Mammary epithelial cell (primary cell): ENCODE measurements at regions of chr3 and their contacts with region 1.

Region 1: DNA sequence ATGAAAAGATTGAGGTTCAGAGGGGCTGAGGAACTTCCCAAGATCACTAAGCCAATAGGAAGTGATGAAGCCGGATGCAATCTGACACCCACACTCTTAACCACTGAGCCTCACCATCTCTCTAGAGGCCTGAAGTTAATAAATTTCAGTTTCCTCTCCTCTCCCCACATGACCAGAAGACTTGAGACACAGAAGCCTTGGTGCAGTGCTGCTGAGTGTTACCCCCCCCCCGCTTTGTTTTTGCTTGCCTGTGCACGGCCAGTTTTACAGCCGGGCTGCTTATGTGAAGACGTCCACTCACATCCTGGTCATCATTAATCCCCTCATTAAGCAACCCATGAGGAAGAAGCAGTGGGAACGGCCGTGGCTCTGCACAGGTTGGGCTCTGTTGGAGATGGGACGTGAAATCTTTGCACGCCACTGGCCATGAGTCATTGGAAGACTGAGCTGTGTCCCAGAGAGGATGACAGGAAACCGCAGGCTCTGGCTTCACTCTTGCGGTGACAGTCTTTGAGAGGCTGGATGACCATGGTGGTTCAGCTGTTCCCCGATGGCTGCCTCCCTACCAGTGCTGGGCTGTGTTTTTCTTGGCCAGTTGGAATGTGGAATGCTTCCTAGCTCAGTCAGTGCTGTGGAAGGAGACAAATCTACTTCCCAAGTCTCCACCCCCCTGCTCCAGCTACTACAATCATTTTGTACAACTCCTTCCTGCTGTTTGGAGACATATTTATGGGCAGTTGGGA is 232.6 kb upstream of the LRTM1 start:
- DNase-seq: peak; percentile 14
- H3K4me3 ChIP-seq: no peak overlapping the region
- H3K27ac ChIP-seq: no peak overlapping the region
- H3K4me1 ChIP-seq: no peaks in the 10 kb centered on the region
- H3K27me3 ChIP-seq: no peaks in the 10 kb centered on the region
- CTCF ChIP-seq: no peak

Region 2: DNA sequence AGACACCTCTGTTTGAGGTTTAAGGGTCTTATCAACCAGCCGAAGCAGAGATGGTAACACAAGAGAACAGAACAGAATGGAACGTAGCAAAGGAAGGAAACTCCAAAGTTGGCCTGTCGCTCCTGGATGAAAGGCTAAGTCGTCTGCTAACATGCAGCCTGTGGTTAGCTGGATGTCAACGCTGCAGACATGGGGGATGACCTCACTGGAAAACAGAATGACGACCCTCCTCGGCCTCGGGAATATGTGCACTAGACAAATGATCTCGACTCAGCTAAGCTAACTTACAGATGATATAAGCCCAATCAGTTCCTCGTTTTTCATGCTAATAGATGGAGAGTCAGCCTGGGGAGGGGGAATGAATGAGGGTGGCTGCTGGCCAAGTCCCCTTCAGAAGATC is 54.8 kb before region 1 on chr3:
- CTCF ChIA-PET with region 1: no interaction called
- dilution Hi-C with region 1: loop called (anchors 5 kb)
- in situ Hi-C with region 1: no loop called
- intact Hi-C with region 1: no loop called
- DNase-seq: no peak
- H3K4me3 ChIP-seq: no peak overlapping the region
- H3K27ac ChIP-seq: no peak overlapping the region
- H3K4me1 ChIP-seq: no peaks in the 10 kb centered on the region
- H3K27me3 ChIP-seq: no peaks in the 10 kb centered on the region
- CTCF ChIP-seq: no peak

Region 3: DNA sequence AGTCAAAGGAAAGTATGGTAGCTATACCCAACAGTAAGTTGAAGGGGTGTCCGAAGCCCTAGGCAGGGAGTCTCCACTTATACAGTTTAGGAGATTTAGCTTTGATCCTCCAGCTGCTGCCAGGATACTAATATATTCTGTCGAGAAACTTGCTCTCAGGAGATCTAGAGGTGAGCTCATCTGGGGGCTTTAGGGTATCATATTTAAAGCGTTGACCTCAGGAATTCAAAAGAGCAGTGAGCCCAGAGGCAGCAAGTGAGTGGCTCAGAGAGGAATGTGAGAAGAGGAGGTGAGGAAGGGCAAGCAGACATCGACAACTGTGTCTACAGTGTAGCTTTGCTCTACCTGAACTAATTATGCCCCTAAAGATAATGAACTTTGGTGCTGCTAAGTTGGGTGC is 12.5 kb after region 1 on chr3:
- CTCF ChIA-PET with region 1: no interaction called
- dilution Hi-C with region 1: no loop called
- in situ Hi-C with region 1: no loop called
- intact Hi-C with region 1: no loop called
- DNase-seq: no peak
- H3K4me3 ChIP-seq: no peak overlapping the region
- H3K27ac ChIP-seq: no peak overlapping the region
- H3K4me1 ChIP-seq: no peaks in the 10 kb centered on the region
- H3K27me3 ChIP-seq: no peaks in the 10 kb centered on the region
- CTCF ChIP-seq: no peak

Region 4: GRCh38 chr3:55362210-55362960 is 202.0 kb after region 1 on chr3:
- CTCF ChIA-PET with region 1: no interaction called
- dilution Hi-C with region 1: no loop called
- in situ Hi-C with region 1: no loop called
- intact Hi-C with region 1: no loop called
- DNase-seq: peak; percentile 39
- H3K4me3 ChIP-seq: no peak overlapping the region
- H3K27ac ChIP-seq: no peak overlapping the region
- H3K4me1 ChIP-seq: no peaks in the 10 kb centered on the region
- H3K27me3 ChIP-seq: no peaks in the 10 kb centered on the region
- CTCF ChIP-seq: no peak